Activated CD4-positive, alpha-beta T cell treated with anti-CD3 and anti-CD28 coated beads, Interleukin-2, amount 10 ng/mL, durations not matched to agents 24 days and 14 days (primary cell): ENCODE measurements at regions of chr13 and their contacts with region 1.

Region 1: DNA sequence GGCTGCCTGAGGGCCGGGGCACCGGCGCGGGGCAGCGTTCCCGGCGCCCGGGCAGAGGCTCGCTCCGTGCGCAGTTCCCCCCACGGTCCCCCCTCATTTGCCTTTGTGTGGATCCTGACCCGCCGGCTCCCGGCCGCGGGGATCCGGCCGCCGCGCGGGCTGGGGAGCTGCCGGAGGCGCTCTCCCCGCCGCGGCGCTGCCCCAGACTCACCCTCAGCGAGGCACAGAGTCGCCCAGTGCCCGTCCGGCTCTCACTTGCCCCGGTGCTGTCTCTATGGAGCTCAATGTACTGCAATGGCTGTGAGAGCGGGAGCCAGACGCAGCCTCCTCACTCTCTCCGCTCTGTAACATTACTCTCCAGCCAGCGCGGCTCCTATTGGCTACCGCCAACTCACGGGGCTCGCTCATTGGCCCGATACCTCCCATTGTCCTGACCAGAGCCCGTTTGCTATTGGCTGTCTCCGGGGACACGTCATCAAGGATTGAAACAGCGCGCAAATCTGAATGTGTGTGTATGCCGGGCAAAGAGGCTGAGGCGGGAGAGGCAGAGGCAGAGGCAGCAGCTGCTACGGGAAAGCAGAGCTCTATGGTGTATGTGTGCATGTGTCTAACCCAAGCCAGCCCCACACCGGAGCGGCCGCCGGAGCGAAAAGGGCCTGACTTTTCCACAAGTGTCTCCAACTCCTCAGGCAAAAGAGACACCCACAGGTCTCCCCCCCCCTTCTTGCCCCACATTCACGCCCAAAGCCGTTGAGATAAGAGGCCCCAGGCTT is at the start of gene HMGB1:
- DNase-seq: peak; percentile 99
- H3K4me3 Mint-ChIP-seq: peak within 1 kb of the TSS; percentile 95
- H3K27ac Mint-ChIP-seq: peak within 1 kb of the TSS; percentile 100
- H3K4me1 Mint-ChIP-seq: peaks cover 30% of the 10 kb centered on the region
- H3K27me3 Mint-ChIP-seq: peaks cover 3% of the 10 kb centered on the region
- total RNA-seq, gene HMGB1: 624 and 640 TPM in 2 replicates

Region 2: GRCh38 chr13:29850224-29850898 is 615.4 kb before region 1 on chr13 and contains the start of gene UBL3:
- intact Hi-C with region 1: loop called (anchors 1 kb)
- DNase-seq: peak; percentile 97
- H3K4me3 Mint-ChIP-seq: peak within 1 kb of the TSS; percentile 97
- H3K27ac Mint-ChIP-seq: peak within 1 kb of the TSS; percentile 100
- H3K4me1 Mint-ChIP-seq: peaks cover 43% of the 10 kb centered on the region
- H3K27me3 Mint-ChIP-seq: no peaks in the 10 kb centered on the region
- total RNA-seq, gene UBL3: 9.5 and 10.1 TPM in 2 replicates

Region 3: GRCh38 chr13:30142486-30143211 is 323.1 kb before region 1 on chr13:
- intact Hi-C with region 1: loop called (anchors 2 kb)
- DNase-seq: peak; percentile 78
- H3K4me3 Mint-ChIP-seq: peak overlapping the region; percentile 37
- H3K27ac Mint-ChIP-seq: peak overlapping the region; percentile 93
- H3K4me1 Mint-ChIP-seq: peaks cover 54% of the 10 kb centered on the region
- H3K27me3 Mint-ChIP-seq: peaks cover 2% of the 10 kb centered on the region

Region 4: DNA sequence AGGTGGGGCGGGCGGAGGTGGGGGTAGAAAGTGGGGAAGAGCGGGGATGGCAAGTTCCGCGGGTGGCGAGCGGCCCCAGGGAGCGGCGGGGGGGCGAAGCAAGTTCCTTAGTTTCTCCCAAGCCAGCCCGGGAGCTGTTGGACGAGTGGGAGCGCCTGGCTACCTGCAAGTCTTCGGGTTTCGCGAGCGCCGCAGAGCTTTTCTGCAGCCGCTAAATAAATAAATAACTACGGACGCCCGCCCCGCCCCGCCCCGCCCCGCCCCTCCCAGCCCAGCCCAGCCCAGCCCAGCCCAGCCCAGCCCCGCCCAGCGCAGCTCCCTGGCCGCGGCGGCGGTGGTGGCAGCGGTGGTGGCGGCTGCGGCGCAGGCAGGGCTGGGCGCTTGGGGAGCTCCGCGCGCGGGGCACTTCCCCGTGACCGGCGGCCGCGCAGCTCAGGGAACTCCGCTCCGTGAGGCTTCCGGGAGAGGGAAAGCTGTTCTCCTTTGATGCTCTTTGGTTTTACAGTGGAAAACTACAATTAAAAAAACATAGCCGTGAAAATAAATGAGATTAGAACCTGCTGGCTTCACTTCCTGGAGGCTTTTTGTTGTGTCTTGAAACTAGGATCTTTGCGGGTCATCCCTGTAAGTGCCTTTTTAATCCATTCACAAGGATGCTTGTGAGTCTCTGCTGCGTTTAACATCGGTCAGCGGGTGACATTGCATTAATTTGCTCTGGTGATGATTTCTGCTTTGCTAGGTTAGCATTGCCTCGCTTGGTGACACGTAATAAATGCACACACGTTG is 43.5 kb before region 1 on chr13 and contains the start of gene UBE2L5:
- intact Hi-C with region 1: loop called (anchors 1 kb)
- DNase-seq: peak; percentile 95
- H3K4me3 Mint-ChIP-seq: peak within 1 kb of the TSS; percentile 89
- H3K27ac Mint-ChIP-seq: peak within 1 kb of the TSS; percentile 86
- H3K4me1 Mint-ChIP-seq: peaks cover 26% of the 10 kb centered on the region
- H3K27me3 Mint-ChIP-seq: no peaks in the 10 kb centered on the region
- total RNA-seq, gene UBE2L5: not detected in 2 replicates

Region 5: GRCh38 chr13:30577401-30577852 is 111.7 kb after region 1 on chr13:
- intact Hi-C with region 1: loop called (anchors 1 kb)
- DNase-seq: peak; percentile 76
- H3K4me3 Mint-ChIP-seq: no peak overlapping the region
- H3K27ac Mint-ChIP-seq: no peak overlapping the region
- H3K4me1 Mint-ChIP-seq: peaks cover 26% of the 10 kb centered on the region
- H3K27me3 Mint-ChIP-seq: peaks cover 16% of the 10 kb centered on the region

Region 6: GRCh38 chr13:30739761-30740642 is 274.2 kb after region 1 on chr13:
- intact Hi-C with region 1: loop called (anchors 5 kb)
- DNase-seq: peak; percentile 90
- H3K4me3 Mint-ChIP-seq: peak overlapping the region; percentile 78
- H3K27ac Mint-ChIP-seq: peak overlapping the region; percentile 88
- H3K4me1 Mint-ChIP-seq: peaks cover 73% of the 10 kb centered on the region
- H3K27me3 Mint-ChIP-seq: no peaks in the 10 kb centered on the region

Region 7: GRCh38 chr13:31161828-31162590 is 696.2 kb after region 1 on chr13 and contains the start of gene HSPH1:
- intact Hi-C with region 1: loop called (anchors 2 kb)
- DNase-seq: peak; percentile 100
- H3K4me3 Mint-ChIP-seq: peak within 1 kb of the TSS; percentile 99
- H3K27ac Mint-ChIP-seq: peak within 1 kb of the TSS; percentile 99
- H3K4me1 Mint-ChIP-seq: peaks cover 45% of the 10 kb centered on the region
- H3K27me3 Mint-ChIP-seq: peaks cover 2% of the 10 kb centered on the region
- total RNA-seq, gene HSPH1: 381 and 385 TPM in 2 replicates